Right ventricle myocardium inferior (tissue), 1 donor: ENCODE measurements at regions of chr16 and their contacts with region 1.

Region 1: DNA sequence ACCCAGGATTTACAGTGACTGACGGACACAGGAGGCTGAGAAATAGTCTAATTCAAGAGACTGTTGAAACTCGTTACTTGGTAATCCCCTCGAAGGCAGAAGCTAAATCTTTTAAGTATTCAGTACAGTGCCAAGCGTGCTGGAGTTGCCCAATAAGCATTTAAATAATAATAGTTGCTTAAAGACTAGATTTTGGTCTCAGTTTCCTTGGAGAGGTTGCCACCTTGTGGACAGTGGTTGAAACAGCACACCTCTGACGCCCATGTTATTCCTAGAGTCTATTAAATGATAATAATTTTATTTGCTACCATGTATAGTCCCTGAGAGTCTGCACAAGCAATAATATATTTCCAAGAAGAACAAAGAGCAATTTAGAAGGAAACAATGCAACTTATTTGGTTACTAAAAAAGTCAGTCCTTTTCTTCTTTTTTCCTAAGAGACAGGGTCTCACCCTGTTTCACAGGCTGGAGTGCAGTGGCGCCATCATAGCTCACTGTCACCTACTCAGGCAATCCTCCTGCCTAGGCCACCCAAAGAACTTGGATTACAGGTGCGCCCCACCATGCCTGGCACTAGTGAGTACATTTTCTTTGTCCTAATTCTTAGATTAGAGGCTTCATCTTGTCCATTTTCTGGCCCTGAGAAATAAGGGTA is 138.0 kb upstream of the NUDT7 start:
- DNase-seq: no peak
- ATAC-seq: no peak

Region 2: DNA sequence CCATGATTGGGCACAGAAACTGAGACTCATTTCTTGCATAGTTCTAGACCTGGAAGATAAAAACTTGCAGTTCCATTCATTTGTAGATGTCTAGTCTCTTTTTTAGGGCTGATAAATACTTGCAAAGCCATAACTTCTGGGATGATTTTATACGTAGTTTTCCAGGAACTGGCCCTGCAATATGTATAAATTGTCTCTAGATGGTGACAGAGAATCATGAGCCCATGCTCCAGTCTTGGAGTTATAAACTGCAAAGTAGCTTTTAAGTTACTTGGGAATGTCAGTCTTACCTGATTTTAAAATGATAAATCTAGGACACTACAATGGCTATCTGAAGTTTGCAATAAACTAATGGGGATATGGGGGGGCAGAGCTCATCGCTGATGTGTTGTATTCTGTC is 146.5 kb before region 1 on chr16:
- intact Hi-C with region 1: loop called (anchors 2 kb)
- DNase-seq: no peak
- ATAC-seq: no peak

Region 3: DNA sequence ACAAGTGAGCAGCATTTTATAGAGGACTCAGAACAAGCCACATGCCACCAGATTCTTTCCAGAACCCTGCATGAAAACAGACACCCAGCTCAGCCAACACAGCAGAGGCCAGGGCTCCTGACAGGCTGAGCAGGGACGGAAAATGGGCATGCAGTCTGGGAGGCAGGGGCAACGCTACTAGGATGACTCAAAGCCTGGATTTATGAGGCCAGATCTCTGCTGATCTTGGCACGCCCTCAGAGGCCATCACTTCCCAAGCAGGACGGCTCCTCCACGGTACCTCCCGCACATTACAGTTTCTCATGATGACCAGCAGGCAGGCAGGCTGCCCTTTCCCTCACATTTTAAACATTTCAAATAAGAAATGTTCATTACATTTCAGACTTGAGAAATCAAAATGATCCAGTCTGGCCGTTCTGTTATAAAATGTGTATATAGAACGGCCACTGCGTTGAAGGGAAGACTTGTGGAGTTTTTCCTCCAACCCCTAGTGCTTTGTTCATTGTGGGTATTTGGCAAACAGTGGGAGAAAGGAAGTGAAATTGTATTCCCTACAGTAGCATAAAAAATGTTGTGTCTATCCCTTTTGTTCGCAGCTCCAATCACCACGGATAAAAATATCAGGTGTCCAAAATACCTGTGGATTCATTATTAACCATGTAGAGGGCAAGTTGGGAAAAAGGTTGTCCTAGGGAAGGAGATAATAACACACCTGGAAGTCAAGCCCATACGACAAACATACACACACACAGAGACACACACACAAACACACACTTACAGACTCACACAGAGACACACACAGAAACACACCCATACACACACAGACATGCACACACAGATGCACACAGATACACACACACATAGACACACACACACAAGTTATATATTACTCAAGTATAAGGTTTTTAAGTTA is 84.7 kb before region 1 on chr16:
- intact Hi-C with region 1: loop called (anchors 5 kb)
- DNase-seq: peak; percentile 50
- ATAC-seq: peak; percentile 23

Region 4: GRCh38 chr16:78198288-78198687 is 614.0 kb after region 1 on chr16:
- intact Hi-C with region 1: no loop called
- DNase-seq: no peak
- ATAC-seq: no peak